MCF 10A (cell line): ENCODE measurements at regions of chr7 and their contacts with region 1.

Region 1: GRCh38 chr7:32490127-32490822 is at the start of gene LSM5:
- DNase-seq: peak; percentile 93
- H3K4me3 Mint-ChIP-seq: peak within 1 kb of the TSS; percentile 90
- H3K27ac Mint-ChIP-seq: peak within 1 kb of the TSS; percentile 96
- H3K4me1 Mint-ChIP-seq: no peaks in the 10 kb centered on the region
- H3K27me3 Mint-ChIP-seq: no peaks in the 10 kb centered on the region
- CTCF ChIP-seq: no peak
- total RNA-seq, gene LSM5: 87.3 and 105 TPM in 2 replicates

Region 2: DNA sequence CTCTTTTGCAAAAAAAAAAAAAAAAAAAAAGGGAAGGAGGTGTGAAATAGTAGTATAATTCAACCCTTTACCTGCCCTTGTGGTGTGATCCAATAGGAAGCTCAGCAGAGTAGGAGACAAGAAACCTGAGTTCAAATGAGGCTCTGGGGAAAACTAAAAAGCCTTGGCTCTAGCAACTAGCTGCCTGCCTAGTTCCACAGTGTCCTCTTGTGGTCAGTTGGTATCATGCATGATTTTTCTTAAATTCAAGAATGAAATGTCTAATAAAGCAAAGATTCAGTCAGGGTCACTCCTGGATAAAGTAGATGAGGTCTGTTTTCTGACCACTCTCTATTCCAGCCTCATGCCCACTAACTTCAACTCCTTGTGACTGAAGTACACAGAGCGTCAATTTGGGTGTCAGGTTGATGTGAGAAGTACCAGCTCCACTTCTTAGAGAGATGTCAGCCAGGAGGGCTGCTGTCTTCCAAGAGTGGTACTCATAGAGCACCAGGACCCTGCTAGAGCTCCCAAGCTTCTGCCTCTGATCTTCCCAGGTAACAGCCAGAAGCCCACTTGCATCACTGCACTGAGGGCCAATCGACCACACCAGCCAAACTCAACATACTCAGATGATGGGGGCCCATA is 10.6 kb before region 1 on chr7:
- CTCF ChIA-PET with region 1: interaction called, 12 read pairs
- POLR2A ChIA-PET with region 1: interaction called, 6 read pairs
- intact Hi-C with region 1: no loop called
- DNase-seq: peak; percentile 63
- H3K4me3 Mint-ChIP-seq: no peak overlapping the region
- H3K27ac Mint-ChIP-seq: no peak overlapping the region
- H3K4me1 Mint-ChIP-seq: peaks cover 9% of the 10 kb centered on the region
- H3K27me3 Mint-ChIP-seq: no peaks in the 10 kb centered on the region
- CTCF ChIP-seq: peak; percentile 85

Region 3: DNA sequence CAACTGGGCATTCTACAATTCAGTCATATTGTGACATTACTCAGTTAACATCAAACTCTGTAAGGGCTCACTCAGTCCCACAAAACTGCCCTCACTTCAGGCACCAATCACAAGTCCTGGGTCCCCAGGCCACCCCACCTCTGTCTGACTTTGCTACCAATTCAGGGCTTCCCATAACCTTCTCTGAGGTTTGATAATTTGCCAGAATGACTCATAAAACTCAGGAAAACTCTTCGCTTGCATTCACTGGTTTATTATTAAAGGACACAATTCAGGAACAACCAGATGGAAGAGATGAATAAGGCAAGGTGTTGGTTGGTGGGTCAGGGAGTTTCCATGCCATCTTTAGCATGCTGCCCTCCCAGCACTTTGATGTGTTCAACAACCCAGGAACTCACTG is 46.3 kb after region 1 on chr7:
- CTCF ChIA-PET with region 1: interaction called, 3 read pairs
- POLR2A ChIA-PET with region 1: interaction called, 10 read pairs
- intact Hi-C with region 1: loop called (anchors 2 kb)
- DNase-seq: peak; percentile 77
- H3K4me3 Mint-ChIP-seq: no peak overlapping the region
- H3K27ac Mint-ChIP-seq: no peak overlapping the region
- H3K4me1 Mint-ChIP-seq: peaks cover 14% of the 10 kb centered on the region
- H3K27me3 Mint-ChIP-seq: no peaks in the 10 kb centered on the region
- CTCF ChIP-seq: no peak

Region 4: DNA sequence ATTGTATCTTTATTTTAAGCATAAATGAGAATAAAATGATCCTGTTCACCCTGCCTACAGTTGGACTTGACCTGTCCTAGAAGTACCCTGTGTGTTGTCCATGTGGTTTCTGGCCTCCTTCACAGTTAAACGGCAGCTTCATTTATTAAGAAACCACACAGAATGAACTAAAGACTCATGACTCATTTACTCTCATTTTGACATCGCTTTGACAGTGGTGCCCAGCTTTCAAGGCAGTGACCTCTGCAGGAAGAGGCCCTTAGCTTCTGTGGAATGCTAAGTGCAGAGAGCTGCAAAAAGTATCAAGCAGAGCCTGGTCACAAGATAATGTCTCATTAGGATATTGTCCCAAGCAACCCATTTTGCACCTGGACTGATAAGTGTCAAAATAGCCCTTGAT is 98.4 kb after region 1 on chr7:
- CTCF ChIA-PET with region 1: no interaction called
- POLR2A ChIA-PET with region 1: interaction called, 5 read pairs
- intact Hi-C with region 1: loop called (anchors 2 kb)
- DNase-seq: peak; percentile 85
- H3K4me3 Mint-ChIP-seq: no peak overlapping the region
- H3K27ac Mint-ChIP-seq: peak overlapping the region; percentile 39
- H3K4me1 Mint-ChIP-seq: peaks cover 6% of the 10 kb centered on the region
- H3K27me3 Mint-ChIP-seq: no peaks in the 10 kb centered on the region
- CTCF ChIP-seq: no peak